ENCODE measurements at regions of chr10 and their contacts with region 1.

Region 1: DNA sequence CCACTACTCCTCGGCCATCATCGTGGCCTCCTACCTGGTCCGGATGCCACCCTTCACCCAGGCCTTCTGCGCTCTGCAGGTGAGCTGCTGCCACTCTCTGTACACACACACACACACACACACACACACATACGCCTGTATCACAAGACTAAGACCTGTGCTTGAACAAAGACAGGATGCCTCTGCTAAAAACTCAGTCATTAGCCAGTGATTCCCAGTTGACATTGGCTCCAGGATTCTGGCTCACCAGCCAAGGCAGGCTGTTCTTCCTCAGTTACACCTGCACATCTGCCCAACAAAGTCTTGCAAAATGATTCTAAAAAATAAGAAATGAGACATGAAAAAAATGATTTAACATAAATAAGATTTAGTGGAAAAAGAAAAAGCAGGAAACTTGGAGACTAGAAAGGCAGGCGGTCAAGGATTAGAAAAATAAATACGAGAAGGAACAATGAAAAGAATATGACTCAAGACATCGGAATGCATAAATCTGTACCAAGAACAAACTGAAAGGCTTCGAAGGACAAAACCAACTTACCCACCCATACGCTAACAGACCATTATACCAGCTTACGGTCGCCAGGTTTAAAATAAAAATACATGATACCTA is 7.4 kb upstream of the LRRC18 start:
- DNase-seq: no peak
- ATAC-seq: no peak

Region 2: GRCh38 chr10:47412869-47413268 is 1534.1 kb before region 1 on chr10:
- intact Hi-C with region 1: loop called (anchors 10 kb)
- DNase-seq: no peak
- ATAC-seq: no peak

Measured in sciatic nerve (tissue), 2 donors.